Activated CD4-positive, alpha-beta T cell treated with anti-CD3 and anti-CD28 coated beads for 36 hours (primary cell): ENCODE measurements at regions of chr20 and their contacts with region 1.

Region 1: DNA sequence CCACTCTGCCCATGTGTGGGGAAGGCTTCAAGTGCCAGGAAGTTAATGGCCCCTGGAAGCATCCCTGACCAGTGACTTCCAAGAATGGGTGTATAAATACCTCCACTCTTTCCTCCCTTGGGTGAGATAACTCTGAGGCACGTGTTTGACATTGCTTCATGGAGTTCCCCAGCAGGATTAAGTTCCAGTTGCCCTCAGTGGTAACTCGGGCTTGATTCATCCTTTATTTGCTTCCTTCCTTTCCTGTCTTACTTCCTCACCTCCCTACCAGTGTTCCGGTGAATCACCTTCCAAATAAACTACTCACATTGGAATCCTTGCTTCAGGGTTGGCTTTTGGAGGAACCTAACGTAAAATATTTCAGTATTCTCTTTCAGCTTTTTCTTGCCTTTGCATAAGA is 84.6 kb upstream of the JAG1 start:
- DNase-seq: no peak
- ATAC-seq: no peak
- H3K4me3 Mint-ChIP-seq: no peak overlapping the region
- H3K27ac Mint-ChIP-seq: no peak overlapping the region
- H3K4me1 Mint-ChIP-seq: no peaks in the 10 kb centered on the region
- H3K27me3 Mint-ChIP-seq: peaks cover 14% of the 10 kb centered on the region

Region 2: DNA sequence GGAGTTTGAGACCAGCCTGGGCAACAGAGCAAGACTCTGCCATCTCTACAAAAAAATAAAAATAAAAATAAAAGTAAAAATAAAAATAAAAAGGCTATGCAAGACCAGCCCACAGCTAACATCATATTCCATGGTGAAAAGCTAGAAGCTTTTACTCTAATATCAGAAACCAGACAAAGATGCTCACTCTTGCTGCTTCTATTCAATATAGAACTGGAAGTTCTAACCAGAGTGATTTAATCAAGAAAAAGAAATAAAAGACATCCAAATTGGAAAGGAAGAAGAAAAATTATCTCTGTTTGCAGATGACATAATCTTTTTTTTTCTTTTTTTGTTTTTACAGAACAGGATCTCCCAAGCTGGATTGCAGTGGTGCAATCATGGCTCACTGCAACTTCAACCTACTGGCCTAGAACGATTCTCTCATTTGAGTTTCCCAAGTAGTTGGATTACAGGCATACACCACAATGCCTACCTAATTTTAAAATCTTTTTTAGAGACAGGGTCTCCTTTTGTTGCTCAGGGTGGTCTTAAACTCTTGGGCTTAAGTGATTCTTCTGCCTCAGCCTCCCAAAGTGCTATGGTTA is 16.0 kb after region 1 on chr20:
- CTCF ChIA-PET with region 1: no interaction called
- POLR2A ChIA-PET with region 1: no interaction called
- intact Hi-C with region 1: no loop called
- DNase-seq: no peak
- ATAC-seq: no peak
- H3K4me3 Mint-ChIP-seq: no peak overlapping the region
- H3K27ac Mint-ChIP-seq: no peak overlapping the region
- H3K4me1 Mint-ChIP-seq: no peaks in the 10 kb centered on the region
- H3K27me3 Mint-ChIP-seq: peaks cover 6% of the 10 kb centered on the region

Region 3: DNA sequence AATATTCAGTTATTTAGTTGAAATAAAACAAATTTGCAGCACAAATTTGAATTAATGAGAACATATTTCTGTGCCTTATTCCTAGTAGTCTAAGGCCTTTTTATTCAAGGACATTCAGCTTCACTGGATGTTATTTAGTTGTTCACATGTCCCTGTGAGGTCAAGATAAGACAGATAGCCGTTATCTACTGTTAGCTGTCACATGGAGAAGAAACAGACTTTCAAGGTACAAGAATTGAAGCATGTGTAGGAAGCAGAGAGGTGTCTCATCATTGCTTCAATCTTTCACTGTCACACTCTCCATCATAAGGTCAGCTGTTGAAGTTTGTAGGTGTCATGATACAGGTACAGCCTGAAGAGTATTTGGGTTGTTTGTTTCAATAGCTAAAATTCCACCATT is 28.2 kb after region 1 on chr20:
- CTCF ChIA-PET with region 1: no interaction called
- POLR2A ChIA-PET with region 1: no interaction called
- intact Hi-C with region 1: loop called in 1 of 2 experiments (anchors 1 kb)
- DNase-seq: no peak
- ATAC-seq: no peak
- H3K4me3 Mint-ChIP-seq: no peak overlapping the region
- H3K27ac Mint-ChIP-seq: no peak overlapping the region
- H3K4me1 Mint-ChIP-seq: no peaks in the 10 kb centered on the region
- H3K27me3 Mint-ChIP-seq: peaks cover 11% of the 10 kb centered on the region